B cell (primary cell): ENCODE measurements at regions of chr18 and their contacts with region 1.

Region 1: DNA sequence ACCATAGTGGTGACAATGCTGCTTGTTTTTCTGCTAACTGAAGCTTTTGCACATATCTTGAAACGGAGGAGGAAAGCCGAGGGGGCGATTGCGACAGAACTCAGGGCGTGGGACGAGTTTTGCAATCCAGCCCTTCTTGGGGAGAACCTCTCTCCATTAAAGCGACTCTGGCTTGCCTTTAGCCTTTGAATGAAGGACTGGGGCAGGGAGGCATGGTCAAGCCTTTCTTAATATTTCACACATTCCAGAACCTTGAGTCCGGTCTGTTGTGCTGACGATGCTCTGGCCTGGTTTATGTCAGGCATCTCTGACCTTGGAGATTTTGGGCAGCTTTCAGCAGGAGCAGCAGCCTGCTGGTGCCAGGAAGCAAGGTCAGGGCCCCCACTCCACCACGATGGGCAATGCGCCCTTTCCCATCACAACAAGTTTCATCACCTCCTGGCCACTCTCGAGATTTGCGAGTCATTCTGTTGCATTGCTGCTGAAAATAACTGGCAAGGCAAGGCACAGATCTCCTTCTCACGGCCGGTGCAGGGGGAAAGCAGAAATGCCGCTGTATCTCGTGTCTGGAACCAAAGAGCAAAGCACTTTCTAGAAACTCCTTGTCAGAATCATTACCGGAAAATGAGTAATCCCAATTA is 10.8 kb downstream of the EMILIN2 start:
- DNase-seq: no peak
- ATAC-seq: no peak
- H3K4me3 ChIP-seq: no peak overlapping the region
- H3K4me3 Mint-ChIP-seq: no peak overlapping the region
- H3K27ac ChIP-seq: no peak overlapping the region
- H3K27ac Mint-ChIP-seq: no peak overlapping the region
- H3K4me1 ChIP-seq: no peaks in the 10 kb centered on the region
- H3K4me1 Mint-ChIP-seq: no peaks in the 10 kb centered on the region
- H3K27me3 ChIP-seq: no peaks in the 10 kb centered on the region
- H3K27me3 Mint-ChIP-seq: no peaks in the 10 kb centered on the region
- CTCF ChIP-seq: no peak

Region 2: GRCh38 chr18:2881088-2881839 is 23.7 kb after region 1 on chr18:
- CTCF ChIA-PET with region 1: no interaction called
- POLR2A ChIA-PET with region 1: interaction called, 10 read pairs
- intact Hi-C with region 1: no loop called
- DNase-seq: no peak
- ATAC-seq: no peak
- H3K4me3 ChIP-seq: no peak overlapping the region
- H3K4me3 Mint-ChIP-seq: no peak overlapping the region
- H3K27ac ChIP-seq: no peak overlapping the region
- H3K27ac Mint-ChIP-seq: no peak overlapping the region
- H3K4me1 ChIP-seq: peaks cover 9 to 10% of the 10 kb centered on the region in 2 donors
- H3K4me1 Mint-ChIP-seq: peaks cover 14% of the 10 kb centered on the region
- H3K27me3 ChIP-seq: peaks cover 0 to 5% (median 2%) of the 10 kb centered on the region in 4 experiments
- H3K27me3 Mint-ChIP-seq: peaks cover 20% of the 10 kb centered on the region
- CTCF ChIP-seq: no peak